ENCODE measurements at regions of chr11 and their contacts with region 1.

Region 1: DNA sequence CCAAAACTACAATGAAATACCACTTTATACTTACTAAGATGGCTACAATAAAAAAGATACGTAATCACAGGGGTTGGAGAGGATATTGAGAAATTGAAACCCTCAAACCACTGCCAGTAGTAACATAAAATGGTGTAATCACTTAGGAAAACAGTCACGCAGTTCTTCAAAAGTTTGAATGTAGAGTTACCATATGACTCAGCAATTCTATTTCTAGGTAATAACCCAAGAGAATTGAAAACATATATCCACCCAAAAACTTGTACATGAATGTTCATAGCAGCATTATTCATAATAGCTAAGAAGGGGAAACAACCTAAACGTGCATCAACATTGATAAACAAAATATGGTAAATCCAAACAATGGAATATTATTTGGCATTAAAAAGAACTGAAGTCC is 24.4 kb upstream of the PSMA1 start:
- DNase-seq: no peak
- ATAC-seq: peak; percentile 79
- H3K4me3 Mint-ChIP-seq: no peak overlapping the region
- H3K27ac Mint-ChIP-seq: peak overlapping the region; percentile 72
- H3K4me1 Mint-ChIP-seq: peaks cover 40% of the 10 kb centered on the region
- H3K27me3 Mint-ChIP-seq: no peaks in the 10 kb centered on the region

Region 2: GRCh38 chr11:14578541-14578956 is 33.9 kb after region 1 on chr11:
- CTCF ChIA-PET with region 1: interaction called, 4 read pairs
- POLR2A ChIA-PET with region 1: interaction called, 6 read pairs
- intact Hi-C with region 1: loop called (anchors 1 to 2 kb)
- DNase-seq: peak; percentile 58
- ATAC-seq: peak; percentile 89
- H3K4me3 Mint-ChIP-seq: peak overlapping the region; percentile 0
- H3K27ac Mint-ChIP-seq: peak overlapping the region; percentile 74
- H3K4me1 Mint-ChIP-seq: peaks cover 49% of the 10 kb centered on the region
- H3K27me3 Mint-ChIP-seq: no peaks in the 10 kb centered on the region

Measured in activated CD4-positive, alpha-beta T cell treated with anti-CD3 and anti-CD28 coated beads for 36 hours (primary cell).